HEK293 (cell line): ENCODE measurements at regions of chr10 and their contacts with region 1.

Region 1: GRCh38 chr10:13074561-13075451 is 25.2 kb upstream of the OPTN start:
- H3K4me3 ChIP-seq: no peak overlapping the region
- H3K27ac ChIP-seq: no peak overlapping the region
- H3K4me1 ChIP-seq: no peaks in the 10 kb centered on the region
- CTCF ChIP-seq: peak; percentile 68; the same call in 1 of the 2 replicates

Region 2: DNA sequence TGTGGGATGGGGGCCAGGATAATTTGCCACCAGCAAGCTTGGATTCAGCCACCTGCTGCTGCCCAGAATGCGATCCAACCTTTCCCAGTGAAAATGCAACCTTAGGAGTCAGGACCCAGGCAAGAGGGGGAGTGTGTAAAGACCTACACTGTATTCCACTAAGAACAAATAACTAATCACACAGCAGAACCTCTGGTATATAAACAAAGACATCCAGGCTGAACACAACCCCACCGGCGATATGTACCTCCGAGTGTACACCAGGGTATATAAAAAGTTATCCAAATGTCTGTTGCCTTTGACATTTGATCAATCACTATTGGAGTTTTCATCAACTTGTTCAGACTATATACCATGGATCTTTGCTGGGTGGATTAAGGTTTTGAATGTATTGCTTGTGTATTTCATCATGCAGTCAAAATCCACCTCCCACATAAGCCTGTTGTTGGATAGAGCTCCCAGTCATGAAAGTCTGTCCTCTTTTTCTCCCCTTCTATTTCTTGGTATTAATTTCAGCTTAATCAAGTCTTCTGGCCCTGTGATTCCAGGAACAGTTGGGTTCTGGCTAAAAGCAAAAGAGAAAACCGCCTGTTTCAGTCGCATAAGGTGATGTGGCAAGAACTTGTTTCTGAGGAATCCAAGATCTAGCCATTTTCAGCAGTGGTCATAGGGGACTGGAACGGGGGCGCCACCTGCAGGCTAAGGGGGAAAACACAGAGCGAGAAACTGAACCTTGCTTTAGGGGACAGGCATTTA is 364.0 kb before region 1 on chr10:
- CTCF ChIA-PET with region 1: interaction called, 20 read pairs
- POLR2A ChIA-PET with region 1: no interaction called
- H3K4me3 ChIP-seq: no peak overlapping the region
- H3K27ac ChIP-seq: peak overlapping the region; percentile 50
- H3K4me1 ChIP-seq: peaks cover 22% of the 10 kb centered on the region
- CTCF ChIP-seq: peak; percentile 72

Region 3: DNA sequence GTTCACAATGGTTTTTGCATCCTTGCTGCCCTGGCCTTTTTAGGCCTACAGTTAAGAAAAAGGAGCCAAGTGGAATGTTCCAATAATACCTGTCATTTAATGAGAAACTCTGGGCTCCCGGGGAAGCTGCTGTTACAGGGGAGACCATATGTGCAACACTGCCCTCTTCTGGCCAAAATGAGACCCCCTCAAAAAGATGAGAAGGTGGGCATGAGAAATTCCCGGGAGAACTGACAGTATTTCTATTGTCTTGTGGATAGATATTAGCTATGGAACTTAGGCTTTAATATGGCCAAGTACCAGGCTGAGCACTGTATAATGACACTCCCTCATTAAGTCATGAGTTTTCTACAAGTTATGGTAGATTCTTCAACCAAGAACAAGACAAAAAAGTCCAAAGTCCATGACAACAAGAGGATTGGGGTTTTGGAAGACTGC is 172.7 kb before region 1 on chr10:
- CTCF ChIA-PET with region 1: interaction called, 12 read pairs
- POLR2A ChIA-PET with region 1: interaction called, 4 read pairs
- H3K4me3 ChIP-seq: no peak overlapping the region
- H3K27ac ChIP-seq: no peak overlapping the region
- H3K4me1 ChIP-seq: no peaks in the 10 kb centered on the region
- CTCF ChIP-seq: peak; percentile 39; the same call in 1 of the 2 replicates

Region 4: DNA sequence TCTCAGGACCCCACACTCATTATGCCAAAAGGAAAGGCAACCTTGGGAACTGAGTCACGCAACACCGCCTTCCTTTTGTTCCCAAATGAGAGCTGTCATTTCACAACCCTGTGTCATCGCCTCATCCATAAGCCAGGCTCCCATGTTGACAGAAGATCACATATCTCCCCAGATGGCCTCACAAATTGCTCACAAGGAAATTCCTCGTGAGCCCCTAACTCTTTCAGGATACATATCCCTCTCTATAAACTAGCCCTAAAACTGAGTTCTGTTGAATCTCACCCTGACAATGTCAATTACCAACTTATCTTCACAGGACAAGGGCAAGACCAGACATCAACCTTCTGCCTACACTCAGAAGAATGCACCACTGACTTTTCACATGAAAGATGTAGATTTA is 95.9 kb before region 1 on chr10:
- CTCF ChIA-PET with region 1: no interaction called
- POLR2A ChIA-PET with region 1: no interaction called
- H3K4me3 ChIP-seq: no peak overlapping the region
- H3K27ac ChIP-seq: no peak overlapping the region
- H3K4me1 ChIP-seq: peaks cover 13% of the 10 kb centered on the region
- CTCF ChIP-seq: no peak

Region 5: DNA sequence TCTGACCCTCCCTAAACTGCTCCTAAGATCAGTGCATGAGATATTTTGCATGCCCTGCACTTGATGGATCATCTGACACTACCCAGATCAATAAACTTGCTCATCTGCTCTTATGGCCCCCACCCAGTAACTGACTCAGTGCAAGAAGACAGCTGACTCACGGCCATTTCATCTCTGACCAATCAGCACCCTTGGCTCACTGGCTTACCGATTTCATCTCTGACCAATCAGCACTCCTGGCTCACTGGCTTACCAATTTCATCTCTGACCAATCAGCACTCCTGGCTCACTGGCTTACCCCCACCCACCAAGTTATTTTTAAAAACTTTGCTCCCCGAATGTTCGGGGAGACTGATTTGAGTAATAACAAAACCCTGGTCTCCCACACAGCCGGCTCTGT is 12.0 kb before region 1 on chr10:
- CTCF ChIA-PET with region 1: interaction called, 33 read pairs
- POLR2A ChIA-PET with region 1: no interaction called
- H3K4me3 ChIP-seq: no peak overlapping the region
- H3K27ac ChIP-seq: no peak overlapping the region
- H3K4me1 ChIP-seq: no peaks in the 10 kb centered on the region
- CTCF ChIP-seq: no peak

Region 6: DNA sequence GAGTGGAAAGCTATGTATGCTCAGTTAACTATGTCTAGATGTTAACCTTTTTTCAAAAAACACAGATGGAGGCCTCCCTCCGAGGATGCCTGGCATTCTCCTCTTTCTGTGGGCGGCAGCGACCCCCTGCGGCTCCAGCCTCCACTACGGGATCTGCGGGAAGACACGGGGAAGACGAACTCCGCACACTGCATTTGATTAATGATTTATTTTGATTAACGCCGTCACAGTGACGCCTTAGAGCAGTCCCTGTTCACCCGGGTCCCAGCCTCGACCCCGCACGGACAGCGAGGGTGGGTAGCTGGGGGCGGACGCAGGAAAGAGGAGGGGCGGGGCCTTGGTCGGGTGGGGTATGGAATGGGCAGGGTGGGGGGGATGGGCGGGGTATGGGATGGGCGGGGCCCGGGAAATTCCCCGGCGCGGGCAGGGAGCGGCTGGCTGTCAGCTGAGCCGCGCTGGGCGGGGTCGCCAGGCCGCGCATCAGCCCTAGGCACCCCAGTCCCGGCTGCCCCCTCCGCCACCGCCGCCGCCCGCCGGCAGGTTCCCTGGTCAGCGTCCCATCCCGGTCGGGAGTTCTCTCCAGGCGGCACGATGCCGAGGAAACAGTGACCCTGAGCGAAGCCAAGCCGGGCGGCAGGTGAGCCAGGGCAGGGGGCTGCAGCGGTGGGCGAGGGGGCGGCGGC is 25.0 kb after region 1 on chr10 and contains the start of gene OPTN:
- CTCF ChIA-PET with region 1: interaction called, 18 read pairs
- POLR2A ChIA-PET with region 1: no interaction called
- H3K4me3 ChIP-seq: peak within 1 kb of the TSS; percentile 88
- H3K27ac ChIP-seq: peak within 1 kb of the TSS; percentile 60; the same call in 1 of the 2 replicates
- H3K4me1 ChIP-seq: peaks cover 4% of the 10 kb centered on the region; the same call in 1 of the 2 replicates
- CTCF ChIP-seq: peak; percentile 68